ENCODE measurements at regions of chr2 and their contacts with region 1.

Region 1: GRCh38 chr2:37340637-37341036 is 3.8 kb upstream of the QPCT start:
- DNase-seq: no peak
- H3K4me3 ChIP-seq: no peak overlapping the region
- H3K27ac ChIP-seq: no peak overlapping the region
- H3K4me1 ChIP-seq: no peaks in the 10 kb centered on the region
- H3K27me3 ChIP-seq: no peaks in the 10 kb centered on the region
- CTCF ChIP-seq: no peak

Region 2: GRCh38 chr2:36707050-36707449 is 633.6 kb before region 1 on chr2:
- CTCF ChIA-PET with region 1: no interaction called
- POLR2A ChIA-PET with region 1: no interaction called
- intact Hi-C with region 1: no loop called
- DNase-seq: peak; percentile 40 to 41
- H3K4me3 ChIP-seq: no peak overlapping the region
- H3K27ac ChIP-seq: no peak overlapping the region
- H3K4me1 ChIP-seq: peaks cover 13% of the 10 kb centered on the region
- H3K27me3 ChIP-seq: no peaks in the 10 kb centered on the region
- CTCF ChIP-seq: no peak

Region 3: GRCh38 chr2:37324786-37325624 is 15.6 kb before region 1 on chr2 and contains the start of gene PRKD3:
- CTCF ChIA-PET with region 1: no interaction called
- POLR2A ChIA-PET with region 1: interaction called, 15 read pairs
- intact Hi-C with region 1: no loop called
- DNase-seq: peak; percentile 55
- H3K4me3 ChIP-seq: peak within 1 kb of the TSS; percentile 65
- H3K27ac ChIP-seq: no peak within 1 kb of the TSS
- H3K4me1 ChIP-seq: peaks cover 25% of the 10 kb centered on the region
- H3K27me3 ChIP-seq: no peaks in the 10 kb centered on the region
- CTCF ChIP-seq: no peak
- total RNA-seq, gene PRKD3: 27.1 and 27.5 TPM in 2 replicates

Measured in PC-9 (cell line).